PC-3 (cell line): ENCODE measurements at regions of chr7 and their contacts with region 1.

Region 1: GRCh38 chr7:100896732-100897608 is 1.3 kb upstream of the ACHE start:
- DNase-seq: peak; percentile 37
- ATAC-seq: peak; percentile 51
- H3K4me3 ChIP-seq: no peak overlapping the region
- H3K27ac ChIP-seq: no peak overlapping the region
- H3K4me1 ChIP-seq: peaks cover 4% of the 10 kb centered on the region; the same call in 1 of the 2 replicates
- H3K27me3 ChIP-seq: peaks cover 17% of the 10 kb centered on the region
- CTCF ChIP-seq: peak; percentile 83

Region 2: GRCh38 chr7:100626530-100627237 is 270.3 kb before region 1 on chr7:
- CTCF ChIA-PET with region 1: no interaction called
- POLR2A ChIA-PET with region 1: no interaction called
- intact Hi-C with region 1: no loop called
- DNase-seq: peak; percentile 84
- ATAC-seq: peak; percentile 98
- H3K4me3 ChIP-seq: peak overlapping the region; percentile 75
- H3K27ac ChIP-seq: no peak overlapping the region
- H3K4me1 ChIP-seq: peaks cover 6% of the 10 kb centered on the region
- H3K27me3 ChIP-seq: no peaks in the 10 kb centered on the region
- CTCF ChIP-seq: no peak

Region 3: GRCh38 chr7:100911467-100911866 is 14.5 kb after region 1 on chr7:
- CTCF ChIA-PET with region 1: no interaction called
- POLR2A ChIA-PET with region 1: no interaction called
- intact Hi-C with region 1: no loop called
- DNase-seq: no peak
- ATAC-seq: no peak
- H3K4me3 ChIP-seq: no peak overlapping the region
- H3K27ac ChIP-seq: no peak overlapping the region
- H3K4me1 ChIP-seq: no peaks in the 10 kb centered on the region
- H3K27me3 ChIP-seq: no peaks in the 10 kb centered on the region
- CTCF ChIP-seq: no peak

Region 4: DNA sequence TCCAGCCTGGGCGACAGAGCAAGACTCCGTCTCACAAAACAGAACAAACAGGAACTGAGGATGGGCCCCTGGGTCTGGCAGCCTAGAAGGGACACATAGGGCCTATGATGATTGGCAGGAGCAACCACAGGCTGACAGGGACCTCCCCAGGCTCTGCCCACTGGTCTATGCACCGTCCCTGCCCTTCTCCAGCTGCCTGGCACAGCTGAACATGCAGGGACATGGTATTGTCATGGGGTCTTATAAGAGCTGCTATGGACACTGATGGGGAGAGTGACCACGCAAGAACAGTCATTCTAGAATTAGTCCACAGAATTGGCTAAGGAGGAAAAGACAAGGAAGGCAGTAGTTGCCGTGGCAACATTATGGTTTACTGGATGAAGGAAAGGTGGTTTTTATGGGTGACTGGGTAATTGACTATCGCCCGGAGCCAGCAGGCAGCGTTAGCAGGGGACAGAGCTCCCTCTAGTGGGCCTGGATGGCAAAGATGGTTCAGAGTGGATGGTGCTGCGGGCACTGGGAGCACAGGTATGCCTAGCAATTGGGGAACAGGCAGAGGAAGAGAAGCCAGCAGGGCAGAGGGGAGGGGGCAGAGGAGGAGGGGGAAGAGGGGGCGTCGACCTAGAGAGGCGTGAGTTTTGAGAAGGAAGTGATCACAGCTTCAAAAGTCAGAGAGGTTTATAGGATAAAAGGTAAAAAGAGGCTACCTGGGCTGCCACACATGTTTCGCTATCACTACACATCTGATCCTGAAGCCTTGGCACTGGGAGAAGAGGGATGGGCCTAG is 180.5 kb after region 1 on chr7:
- CTCF ChIA-PET with region 1: no interaction called
- POLR2A ChIA-PET with region 1: no interaction called
- intact Hi-C with region 1: loop called (anchors 1 kb)
- DNase-seq: peak; percentile 90
- ATAC-seq: peak; percentile 99
- H3K4me3 ChIP-seq: no peak overlapping the region
- H3K27ac ChIP-seq: no peak overlapping the region
- H3K4me1 ChIP-seq: peaks cover 3% of the 10 kb centered on the region; the same call in 1 of the 2 replicates
- H3K27me3 ChIP-seq: no peaks in the 10 kb centered on the region
- CTCF ChIP-seq: peak; percentile 95